ENCODE measurements at regions of chr1 and their contacts with region 1.

Region 1: GRCh38 chr1:34520111-34520510 is 234.7 kb upstream of the GJB5 start:
- DNase-seq: no peak
- H3K4me3 ChIP-seq: no peak overlapping the region
- H3K27ac ChIP-seq: no peak overlapping the region
- H3K4me1 ChIP-seq: no peaks in the 10 kb centered on the region
- H3K27me3 ChIP-seq: no peaks in the 10 kb centered on the region
- CTCF ChIP-seq: no peak

Region 2: GRCh38 chr1:34590211-34590623 is 70.1 kb after region 1 on chr1:
- CTCF ChIA-PET with region 1: no interaction called
- dilution Hi-C with region 1: loop called (anchors 5 kb)
- in situ Hi-C with region 1: no loop called
- intact Hi-C with region 1: no loop called
- DNase-seq: peak; percentile 52
- H3K4me3 ChIP-seq: no peak overlapping the region
- H3K27ac ChIP-seq: no peak overlapping the region
- H3K4me1 ChIP-seq: no peaks in the 10 kb centered on the region
- H3K27me3 ChIP-seq: no peaks in the 10 kb centered on the region
- CTCF ChIP-seq: no peak